Naive thymus-derived CD8-positive, alpha-beta T cell (primary cell): ENCODE measurements at regions of chr9 and their contacts with region 1.

Region 1: GRCh38 chr9:35657546-35658136 is at the start of gene RMRP:
- DNase-seq: peak in 9 of 10 donors; percentile 69 to 94 (median 89)
- ATAC-seq: peak; percentile 83 to 85
- H3K4me3 Mint-ChIP-seq: peak within 1 kb of the TSS; percentile 74 to 94 (median 87)
- H3K27ac Mint-ChIP-seq: peak within 1 kb of the TSS; percentile 94 to 100 (median 98)
- H3K4me1 Mint-ChIP-seq: peaks cover 36 to 75% (median 70%) of the 10 kb centered on the region in 4 donors
- H3K27me3 Mint-ChIP-seq: peaks cover 0 to 5% (median 0%) of the 10 kb centered on the region in 5 donors
- polyA plus RNA-seq, gene RMRP: 33.0 TPM in 1 of 3 donors, not detected in the others

Region 2: GRCh38 chr9:35603987-35604577 is 53.6 kb before region 1 on chr9:
- POLR2A ChIA-PET with region 1: interaction called, 33 read pairs
- DNase-seq: peak; percentile 94 to 100 (median 99)
- ATAC-seq: peak; percentile 83 to 87
- H3K4me3 Mint-ChIP-seq: peak overlapping the region; percentile 92 to 99 (median 96)
- H3K27ac Mint-ChIP-seq: peak overlapping the region; percentile 93 to 99 (median 98)
- H3K4me1 Mint-ChIP-seq: peaks cover 26 to 40% (median 34%) of the 10 kb centered on the region in 4 donors
- H3K27me3 Mint-ChIP-seq: no peaks in the 10 kb centered on the region

Region 3: GRCh38 chr9:35611230-35611797 is 46.3 kb before region 1 on chr9:
- POLR2A ChIA-PET with region 1: interaction called, 33 read pairs
- DNase-seq: peak in 8 of 10 donors; percentile 41 to 74 (median 52)
- ATAC-seq: peak; percentile 96 to 98
- H3K4me3 Mint-ChIP-seq: no peak overlapping the region
- H3K27ac Mint-ChIP-seq: peak overlapping the region in 6 of 10 donors; percentile 26 to 79 (median 60)
- H3K4me1 Mint-ChIP-seq: peaks cover 21 to 61% (median 30%) of the 10 kb centered on the region in 4 donors
- H3K27me3 Mint-ChIP-seq: no peaks in the 10 kb centered on the region

Region 4: GRCh38 chr9:35616681-35617459 is 40.8 kb before region 1 on chr9:
- POLR2A ChIA-PET with region 1: interaction called, 17 read pairs
- DNase-seq: peak; percentile 53 to 84 (median 64)
- ATAC-seq: peak; percentile 74 to 84
- H3K4me3 Mint-ChIP-seq: peak overlapping the region; percentile 82 to 94 (median 87)
- H3K27ac Mint-ChIP-seq: peak overlapping the region; percentile 90 to 98 (median 94)
- H3K4me1 Mint-ChIP-seq: peaks cover 32 to 88% (median 45%) of the 10 kb centered on the region in 4 donors
- H3K27me3 Mint-ChIP-seq: no peaks in the 10 kb centered on the region

Region 5: GRCh38 chr9:35748858-35749514 is 91.3 kb after region 1 on chr9 and contains the starts of genes GBA2 and RGP1:
- POLR2A ChIA-PET with region 1: interaction called, 13 read pairs
- DNase-seq: peak; percentile 24 to 74 (median 56)
- ATAC-seq: peak; percentile 79 to 84
- H3K4me3 Mint-ChIP-seq: peak within 1 kb of the TSS; percentile 90 to 99 (median 96)
- H3K27ac Mint-ChIP-seq: peak within 1 kb of the TSS; percentile 90 to 97 (median 96)
- H3K4me1 Mint-ChIP-seq: peaks cover 36 to 55% (median 49%) of the 10 kb centered on the region in 4 donors
- H3K27me3 Mint-ChIP-seq: no peaks in the 10 kb centered on the region
- polyA plus RNA-seq, gene GBA2: 14.8 to 28.3 (median 22.0) TPM
- polyA plus RNA-seq, gene RGP1: 6.8 to 9.6 (median 8.1) TPM